Activated CD4-positive, alpha-beta memory T cell treated with anti-CD3 and anti-CD28 coated beads, Interleukin-2, amount 10 ng/mL, durations not matched to agents 7 days and 5 days (primary cell): ENCODE measurements at regions of chr7 and their contacts with region 1.

Region 1: GRCh38 chr7:142385491-142386340 is 127.9 kb upstream of the PRSS58 start:
- DNase-seq: peak; percentile 57
- H3K4me3 Mint-ChIP-seq: no peak overlapping the region
- H3K27ac Mint-ChIP-seq: peak overlapping the region; percentile 37
- H3K4me1 Mint-ChIP-seq: peaks cover 28% of the 10 kb centered on the region
- H3K27me3 Mint-ChIP-seq: no peaks in the 10 kb centered on the region

Region 2: GRCh38 chr7:142053988-142054387 is 331.7 kb before region 1 on chr7:
- CTCF ChIA-PET with region 1: no interaction called
- POLR2A ChIA-PET with region 1: no interaction called
- DNase-seq: no peak
- H3K4me3 Mint-ChIP-seq: no peak overlapping the region
- H3K27ac Mint-ChIP-seq: no peak overlapping the region
- H3K4me1 Mint-ChIP-seq: no peaks in the 10 kb centered on the region
- H3K27me3 Mint-ChIP-seq: peaks cover 4% of the 10 kb centered on the region

Region 3: DNA sequence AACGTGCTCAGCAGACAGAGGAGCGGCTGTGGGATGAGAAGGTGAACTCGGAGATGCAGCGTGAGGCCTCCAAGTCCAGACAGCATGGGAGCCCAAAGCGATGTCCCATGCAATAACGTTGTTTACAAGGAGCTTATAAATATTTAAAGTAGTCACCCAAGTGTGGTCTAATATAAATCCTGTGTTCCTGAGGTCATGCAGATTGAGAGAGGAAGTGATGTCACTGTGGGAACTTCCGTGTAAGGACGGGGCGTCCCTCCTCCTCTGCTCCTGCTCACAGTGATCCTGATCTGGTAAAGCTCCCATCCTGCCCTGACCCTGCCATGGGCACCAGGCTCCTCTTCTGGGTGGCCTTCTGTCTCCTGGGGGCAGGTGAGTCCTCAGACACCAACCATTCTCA is 33.2 kb before region 1 on chr7:
- CTCF ChIA-PET with region 1: interaction called, 10 read pairs
- POLR2A ChIA-PET with region 1: no interaction called
- DNase-seq: no peak
- H3K4me3 Mint-ChIP-seq: peak overlapping the region; percentile 66
- H3K27ac Mint-ChIP-seq: peak overlapping the region; percentile 56
- H3K4me1 Mint-ChIP-seq: peaks cover 23% of the 10 kb centered on the region
- H3K27me3 Mint-ChIP-seq: peaks cover 2% of the 10 kb centered on the region

Region 4: DNA sequence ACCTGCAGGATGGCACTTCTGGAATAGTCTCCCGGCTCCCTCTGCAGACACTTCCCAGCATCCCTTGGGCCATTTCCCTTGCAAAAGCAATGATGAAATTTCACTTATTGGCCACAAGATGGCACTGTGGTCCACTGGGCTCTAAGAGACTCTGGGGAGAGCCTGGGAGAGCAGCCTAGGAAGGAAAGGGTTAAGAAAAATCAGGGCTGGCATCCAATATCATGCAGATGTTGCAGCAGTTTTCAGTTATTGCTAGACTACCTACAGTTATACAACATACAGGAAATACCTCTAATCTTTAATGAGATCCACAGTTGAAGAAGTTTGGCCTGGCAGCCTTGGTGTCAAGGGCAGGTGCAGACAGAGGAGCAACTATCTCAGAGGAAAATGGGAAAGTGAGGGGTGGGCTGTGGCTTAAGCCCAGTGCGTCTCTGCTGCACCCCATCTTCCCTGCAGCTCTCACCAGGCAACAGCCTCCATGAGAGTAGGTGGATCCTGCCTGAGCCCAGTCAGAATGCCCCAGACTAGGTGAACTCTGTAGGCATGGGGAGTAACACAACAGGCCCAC is 27.7 kb before region 1 on chr7:
- CTCF ChIA-PET with region 1: interaction called, 19 read pairs
- POLR2A ChIA-PET with region 1: no interaction called
- DNase-seq: peak; percentile 31
- H3K4me3 Mint-ChIP-seq: no peak overlapping the region
- H3K27ac Mint-ChIP-seq: no peak overlapping the region
- H3K4me1 Mint-ChIP-seq: peaks cover 21% of the 10 kb centered on the region
- H3K27me3 Mint-ChIP-seq: peaks cover 13% of the 10 kb centered on the region